ENCODE measurements at regions of chr3 and their contacts with region 1.

Region 1: GRCh38 chr3:65201926-65202325 is 514.1 kb upstream of the ADAMTS9 start:
- DNase-seq: no peak
- H3K4me3 ChIP-seq: no peak overlapping the region
- H3K27ac ChIP-seq: no peak overlapping the region
- H3K27me3 ChIP-seq: peaks cover 0 to 7% (median 0%) of the 10 kb centered on the region in 45 donors
- CTCF ChIP-seq: no peak

Region 2: GRCh38 chr3:65230256-65231139 is 28.6 kb after region 1 on chr3:
- intact Hi-C with region 1: loop called in 1 of 2 experiments (anchors 2 kb)
- DNase-seq: no peak
- H3K4me3 ChIP-seq: no peak overlapping the region
- H3K27ac ChIP-seq: no peak overlapping the region
- H3K27me3 ChIP-seq: peaks cover 0 to 3% (median 0%) of the 10 kb centered on the region in 45 donors
- CTCF ChIP-seq: no peak

Region 3: GRCh38 chr3:65245133-65246063 is 43.5 kb after region 1 on chr3:
- intact Hi-C with region 1: no loop called
- DNase-seq: no peak
- H3K4me3 ChIP-seq: no peak overlapping the region
- H3K27ac ChIP-seq: no peak overlapping the region
- H3K27me3 ChIP-seq: no peaks in the 10 kb centered on the region
- CTCF ChIP-seq: peak in 49 of 56 donors; percentile 19 to 59 (median 39)